H1 (cell line): ENCODE measurements at regions of chr4 and their contacts with region 1.

Region 1: GRCh38 chr4:53015681-53016080 is 153.6 kb downstream of the RASL11B start:
- DNase-seq: peak in 1 of 2 experiments; percentile 3
- H3K4me3 ChIP-seq: no peak overlapping the region
- H3K27ac ChIP-seq: no peak overlapping the region
- H3K4me1 ChIP-seq: no peaks in the 10 kb centered on the region; a peak in 1 of 7 replicates
- H3K27me3 ChIP-seq: no peaks in the 10 kb centered on the region
- CTCF ChIP-seq: peak in 2 of 3 experiments; percentile 58 to 67; a peak in 3 of 4 replicates
- EP300 ChIP-seq: no peak
- POLR2A ChIP-seq: no peak
- RAD21 ChIP-seq: peak; percentile 93 to 96

Region 2: GRCh38 chr4:52932591-52933470 is 82.8 kb before region 1 on chr4:
- CTCF ChIA-PET with region 1: no interaction called
- POLR2A ChIA-PET with region 1: no interaction called
- DNase-seq: no peak
- H3K4me3 ChIP-seq: no peak overlapping the region
- H3K27ac ChIP-seq: no peak overlapping the region
- H3K4me1 ChIP-seq: peaks cover 0 to 4% (median 0%) of the 10 kb centered on the region in 4 experiments; a peak in 3 of 7 replicates
- H3K27me3 ChIP-seq: no peaks in the 10 kb centered on the region
- CTCF ChIP-seq: no peak
- EP300 ChIP-seq: no peak
- POLR2A ChIP-seq: no peak
- RAD21 ChIP-seq: no peak

Region 3: DNA sequence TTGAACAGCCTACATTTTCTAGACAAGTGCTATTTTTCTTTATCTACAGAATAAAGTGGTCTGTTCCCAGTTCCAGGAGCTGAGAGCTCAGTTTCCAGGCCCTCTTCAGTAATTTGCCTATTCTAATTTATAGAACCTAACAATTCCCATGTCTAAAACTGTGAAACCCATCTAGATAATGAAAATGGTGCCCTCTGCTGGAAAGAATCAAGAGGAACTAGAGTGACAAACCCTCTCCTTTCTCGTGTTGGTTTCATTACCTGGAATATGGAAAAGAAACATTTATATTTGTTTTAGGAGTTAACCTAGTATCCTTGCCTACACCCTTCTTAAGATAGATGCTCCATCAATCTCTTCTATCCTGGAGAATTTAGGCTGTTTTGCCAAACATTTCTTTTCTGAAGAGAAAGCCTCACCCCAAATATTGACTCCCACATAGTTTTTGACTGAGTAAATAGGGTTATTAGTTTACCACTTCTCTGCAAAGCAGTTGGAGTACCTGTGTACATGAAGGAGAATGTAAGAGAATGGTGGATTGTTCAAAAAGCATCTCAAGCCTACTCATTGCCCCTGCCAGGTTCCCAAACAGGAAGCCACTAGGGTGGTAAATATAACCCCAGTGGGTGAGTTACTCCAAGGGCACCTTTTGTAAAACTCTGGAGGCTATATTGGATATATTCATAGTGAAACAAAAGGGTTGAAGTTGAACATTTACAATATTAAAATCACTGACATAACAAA is 31.9 kb before region 1 on chr4:
- CTCF ChIA-PET with region 1: no interaction called
- POLR2A ChIA-PET with region 1: no interaction called
- DNase-seq: no peak
- H3K4me3 ChIP-seq: no peak overlapping the region
- H3K27ac ChIP-seq: no peak overlapping the region
- H3K4me1 ChIP-seq: no peaks in the 10 kb centered on the region; a peak in 1 of 7 replicates
- H3K27me3 ChIP-seq: no peaks in the 10 kb centered on the region
- CTCF ChIP-seq: peak in 2 of 3 experiments; percentile 45 to 52; a peak in 2 of 4 replicates
- EP300 ChIP-seq: no peak
- POLR2A ChIP-seq: no peak
- RAD21 ChIP-seq: peak; percentile 76 to 78

Region 4: DNA sequence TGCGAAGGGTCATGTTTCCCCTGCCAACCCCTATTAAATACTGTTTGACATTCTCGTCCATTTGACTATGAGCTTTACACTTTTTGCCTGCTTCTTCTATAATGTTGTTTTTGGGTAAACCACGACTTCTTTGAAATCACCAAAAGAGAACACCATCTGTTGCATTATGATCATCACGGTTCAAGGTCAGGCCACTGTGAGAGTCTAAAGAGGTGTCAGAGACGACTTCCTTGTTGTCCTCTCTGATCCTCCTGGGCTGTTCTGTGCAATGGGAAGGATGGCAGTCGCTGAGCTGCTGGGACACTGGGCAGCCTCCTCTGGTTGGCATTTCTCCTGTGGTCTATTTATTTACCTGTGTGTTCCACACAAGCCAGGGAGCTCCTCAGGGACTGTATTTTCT is 16.1 kb before region 1 on chr4:
- CTCF ChIA-PET with region 1: interaction called, 11 read pairs
- POLR2A ChIA-PET with region 1: no interaction called
- DNase-seq: no peak
- H3K4me3 ChIP-seq: no peak overlapping the region
- H3K27ac ChIP-seq: no peak overlapping the region
- H3K4me1 ChIP-seq: no peaks in the 10 kb centered on the region
- H3K27me3 ChIP-seq: no peaks in the 10 kb centered on the region
- CTCF ChIP-seq: no peak
- EP300 ChIP-seq: no peak
- POLR2A ChIP-seq: no peak
- RAD21 ChIP-seq: no peak

Region 5: DNA sequence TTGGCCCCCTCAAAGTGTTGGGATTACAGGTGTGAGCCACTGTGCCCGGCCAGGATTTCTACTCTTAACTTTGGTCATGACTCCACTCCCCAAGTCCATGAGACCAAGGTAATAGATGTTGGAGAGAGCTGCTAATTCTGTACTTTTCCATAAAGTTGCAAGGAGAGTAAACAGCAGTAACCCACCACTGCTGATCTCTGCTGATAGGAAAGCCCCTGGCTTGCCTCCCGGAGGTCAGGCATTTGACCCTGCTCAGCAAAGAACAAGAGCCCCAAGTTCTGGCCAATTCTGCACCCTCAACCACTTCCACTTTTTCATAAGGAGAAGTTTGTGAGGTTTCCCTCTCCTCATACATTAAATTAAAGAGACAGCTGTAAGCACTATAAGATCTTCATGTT is 10.5 kb before region 1 on chr4:
- CTCF ChIA-PET with region 1: interaction called, 11 read pairs
- POLR2A ChIA-PET with region 1: no interaction called
- DNase-seq: no peak
- H3K4me3 ChIP-seq: no peak overlapping the region
- H3K27ac ChIP-seq: no peak overlapping the region
- H3K4me1 ChIP-seq: no peaks in the 10 kb centered on the region
- H3K27me3 ChIP-seq: no peaks in the 10 kb centered on the region
- CTCF ChIP-seq: no peak
- EP300 ChIP-seq: no peak
- POLR2A ChIP-seq: no peak
- RAD21 ChIP-seq: no peak

Region 6: DNA sequence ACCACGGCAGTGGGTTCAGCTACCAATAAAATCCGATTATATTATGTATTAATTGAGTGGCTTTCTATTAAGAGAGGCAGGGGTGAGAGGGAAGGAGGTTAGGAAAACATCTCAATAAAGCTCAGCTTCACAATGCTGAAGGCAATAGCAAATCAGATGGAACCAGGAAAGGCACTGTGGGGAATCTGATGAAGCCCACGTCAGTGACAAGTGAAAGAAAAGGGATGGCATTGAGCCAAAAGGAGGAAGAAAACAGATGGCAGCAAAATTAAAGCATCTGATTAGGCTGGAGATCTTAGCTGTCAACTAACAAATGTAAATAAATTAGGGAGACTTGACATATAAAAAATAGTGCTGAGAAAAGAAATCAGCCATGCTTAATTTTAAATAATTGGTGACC is 27.4 kb after region 1 on chr4:
- CTCF ChIA-PET with region 1: interaction called, 11 read pairs
- POLR2A ChIA-PET with region 1: no interaction called
- DNase-seq: no peak
- H3K4me3 ChIP-seq: no peak overlapping the region
- H3K27ac ChIP-seq: no peak overlapping the region
- H3K4me1 ChIP-seq: no peaks in the 10 kb centered on the region
- H3K27me3 ChIP-seq: no peaks in the 10 kb centered on the region
- CTCF ChIP-seq: no peak
- EP300 ChIP-seq: no peak
- POLR2A ChIP-seq: no peak
- RAD21 ChIP-seq: no peak

Region 7: GRCh38 chr4:54228056-54228527 is 1212.4 kb after region 1 on chr4:
- CTCF ChIA-PET with region 1: interaction called, 51 read pairs
- POLR2A ChIA-PET with region 1: no interaction called
- DNase-seq: peak in 1 of 2 experiments; percentile 93
- H3K4me3 ChIP-seq: peak overlapping the region; percentile 32 to 85 (median 50); a peak in 7 of 8 replicates
- H3K27ac ChIP-seq: no peak overlapping the region
- H3K4me1 ChIP-seq: peaks cover 0 to 34% (median 23%) of the 10 kb centered on the region in 4 experiments; a peak in 6 of 7 replicates
- H3K27me3 ChIP-seq: peaks cover 67 to 97% (median 94%) of the 10 kb centered on the region in 4 experiments
- CTCF ChIP-seq: peak in 2 of 3 experiments; percentile 77 to 93; a peak in 3 of 4 replicates
- EP300 ChIP-seq: peak in 1 of 2 experiments; percentile 52; a peak in 1 of 3 replicates
- POLR2A ChIP-seq: no peak
- RAD21 ChIP-seq: peak; percentile 95 to 97